ENCODE measurements at regions of chr6 and their contacts with region 1.

Region 1: DNA sequence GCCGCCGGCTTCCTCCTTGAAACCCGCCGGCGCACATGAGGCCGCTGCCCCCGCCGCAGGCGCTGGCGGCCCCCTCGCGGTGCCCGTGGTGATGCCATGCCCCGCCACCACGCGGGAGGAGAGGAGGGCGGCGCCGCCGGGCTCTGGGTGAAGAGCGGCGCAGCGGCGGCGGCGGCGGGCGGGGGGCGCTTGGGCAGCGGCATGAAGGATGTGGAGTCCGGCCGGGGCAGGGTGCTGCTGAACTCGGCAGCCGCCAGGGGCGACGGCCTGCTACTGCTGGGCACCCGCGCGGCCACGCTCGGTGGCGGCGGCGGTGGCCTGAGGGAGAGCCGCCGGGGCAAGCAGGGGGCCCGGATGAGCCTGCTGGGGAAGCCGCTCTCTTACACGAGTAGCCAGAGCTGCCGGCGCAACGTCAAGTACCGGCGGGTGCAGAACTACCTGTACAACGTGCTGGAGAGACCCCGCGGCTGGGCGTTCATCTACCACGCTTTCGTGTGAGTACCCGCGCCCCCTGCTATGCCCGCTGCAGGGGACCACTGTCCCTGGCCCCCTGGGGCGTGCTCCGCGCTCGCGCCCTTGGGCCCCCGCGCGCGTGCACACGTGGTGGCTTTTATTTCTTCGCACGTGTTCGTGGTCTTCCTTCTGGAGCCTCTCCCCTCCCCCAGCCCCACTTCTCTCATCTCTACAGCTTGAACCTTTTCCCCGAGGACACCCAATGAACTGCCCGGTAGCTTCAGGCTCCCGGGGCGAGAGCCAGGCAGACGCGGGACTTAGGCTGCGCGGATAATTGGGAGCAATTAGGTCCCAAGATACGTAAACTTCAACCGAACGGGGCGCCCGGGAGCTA is 453 bp downstream of the KCNQ5 start:
- DNase-seq: no peak
- H3K4me3 ChIP-seq: peak overlapping the region; percentile 69
- CTCF ChIP-seq: peak; percentile 38

Region 2: GRCh38 chr6:72704979-72705378 is 82.7 kb after region 1 on chr6:
- CTCF ChIA-PET with region 1: no interaction called
- POLR2A ChIA-PET with region 1: no interaction called
- DNase-seq: no peak
- H3K4me3 ChIP-seq: no peak overlapping the region
- CTCF ChIP-seq: no peak

Region 3: GRCh38 chr6:72820906-72821305 is 198.6 kb after region 1 on chr6:
- CTCF ChIA-PET with region 1: no interaction called
- POLR2A ChIA-PET with region 1: no interaction called
- DNase-seq: no peak
- H3K4me3 ChIP-seq: no peak overlapping the region
- CTCF ChIP-seq: no peak

Region 4: DNA sequence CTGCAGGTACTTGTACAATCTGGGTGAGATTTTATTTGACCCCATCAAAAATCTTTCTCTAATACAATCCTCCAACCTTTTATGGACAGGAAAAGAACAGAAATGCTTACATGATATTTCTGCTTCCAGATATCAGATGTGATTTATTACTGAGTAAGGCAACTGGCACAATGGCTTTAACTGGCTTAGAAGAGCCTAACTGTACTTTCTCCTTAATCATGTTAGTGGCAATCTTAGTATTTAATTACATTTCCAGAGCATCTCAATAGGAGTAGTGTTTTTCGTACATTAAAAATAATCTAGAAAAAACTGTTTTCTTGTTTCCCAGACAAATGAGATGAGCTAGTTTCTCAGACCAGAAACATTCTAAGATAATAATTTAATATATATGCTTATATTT is 251.1 kb after region 1 on chr6:
- CTCF ChIA-PET with region 1: no interaction called
- POLR2A ChIA-PET with region 1: no interaction called
- DNase-seq: no peak
- H3K4me3 ChIP-seq: no peak overlapping the region
- CTCF ChIP-seq: no peak

Region 5: GRCh38 chr6:73180763-73181619 is 558.7 kb after region 1 on chr6:
- CTCF ChIA-PET with region 1: interaction called, 62 read pairs
- POLR2A ChIA-PET with region 1: no interaction called
- DNase-seq: peak; percentile 62
- H3K4me3 ChIP-seq: peak overlapping the region; percentile 44
- CTCF ChIP-seq: peak; percentile 74

Measured in AG04449 (cell line).